Naive thymus-derived CD4-positive, alpha-beta T cell (primary cell): ENCODE measurements at regions of chr7 and their contacts with region 1.

Region 1: GRCh38 chr7:1459522-1459892 is 237 bp upstream of the MICALL2 start:
- DNase-seq: peak; percentile 98 to 99 (median 99)
- ATAC-seq: peak; percentile 97
- H3K4me3 ChIP-seq: peak overlapping the region; percentile 73
- H3K4me3 Mint-ChIP-seq: peak overlapping the region in 8 of 10 donors; percentile 58 to 75 (median 70)
- H3K27ac ChIP-seq: peak overlapping the region; percentile 55
- H3K27ac Mint-ChIP-seq: peak overlapping the region in 1 of 9 donors; percentile 76
- H3K4me1 ChIP-seq: peaks cover 8 to 14% of the 10 kb centered on the region in 2 donors
- H3K4me1 Mint-ChIP-seq: peaks cover 7 to 25% (median 18%) of the 10 kb centered on the region in 7 donors
- H3K27me3 ChIP-seq: no peaks in the 10 kb centered on the region
- H3K27me3 Mint-ChIP-seq: peaks cover 0 to 5% (median 0%) of the 10 kb centered on the region in 5 donors

Region 2: DNA sequence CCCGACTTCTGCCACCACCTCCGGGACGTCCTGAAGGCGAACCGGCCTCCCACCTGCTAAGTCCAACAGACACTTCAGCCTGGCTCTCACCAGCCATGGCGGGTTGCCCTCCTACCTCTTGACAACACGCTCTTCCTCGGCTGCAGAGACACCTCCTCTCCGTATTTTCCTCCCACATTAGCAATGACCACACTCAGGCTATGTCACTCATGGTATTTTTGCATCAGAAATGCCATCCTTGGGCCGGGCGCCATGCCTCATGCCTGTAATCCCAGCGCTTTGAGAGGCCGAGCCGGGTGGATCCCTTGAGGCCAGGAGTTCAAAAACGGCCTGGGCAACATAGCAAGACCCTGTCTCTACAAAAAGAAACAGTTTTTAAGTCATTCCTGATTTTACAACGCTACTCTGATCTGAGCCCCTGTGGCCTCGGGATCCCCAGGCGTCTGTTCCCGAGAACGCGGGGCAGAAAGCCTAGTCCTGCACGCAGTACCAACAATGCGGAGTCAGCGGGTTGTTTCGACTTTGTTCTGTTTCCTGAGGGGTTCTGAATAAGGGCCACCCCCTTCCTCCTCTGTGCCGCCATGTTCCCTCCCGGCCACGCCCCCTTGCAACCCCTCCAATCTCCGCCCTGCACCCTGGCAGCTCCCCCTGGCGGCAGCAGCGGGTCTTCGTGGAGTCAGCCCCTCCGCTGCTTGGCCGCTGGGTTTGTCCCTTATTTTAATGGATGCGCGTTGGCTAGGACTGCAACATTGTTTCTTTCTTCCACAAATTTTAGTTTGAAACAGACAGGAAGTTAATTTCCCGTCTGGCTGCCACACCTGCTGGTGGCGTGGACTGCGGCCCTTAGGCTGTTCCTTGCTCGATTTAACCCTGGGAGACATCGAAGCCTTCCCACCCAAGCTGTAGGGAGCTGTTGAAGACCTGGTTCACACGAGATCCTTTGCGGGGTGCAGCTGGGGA is 289.8 kb before region 1 on chr7:
- CTCF ChIA-PET with region 1: no interaction called
- POLR2A ChIA-PET with region 1: no interaction called
- intact Hi-C with region 1: loop called in 1 of 2 experiments (anchors 1 kb)
- DNase-seq: peak; percentile 81 to 95 (median 94)
- ATAC-seq: peak; percentile 100
- H3K4me3 ChIP-seq: peak overlapping the region; percentile 63
- H3K4me3 Mint-ChIP-seq: peak overlapping the region; percentile 82 to 92 (median 89)
- H3K27ac ChIP-seq: peak overlapping the region; percentile 64
- H3K27ac Mint-ChIP-seq: peak overlapping the region in 8 of 9 donors; percentile 88 to 98 (median 94)
- H3K4me1 ChIP-seq: peaks cover 5 to 8% of the 10 kb centered on the region in 2 donors
- H3K4me1 Mint-ChIP-seq: peaks cover 8 to 16% (median 13%) of the 10 kb centered on the region in 7 donors
- H3K27me3 ChIP-seq: no peaks in the 10 kb centered on the region
- H3K27me3 Mint-ChIP-seq: no peaks in the 10 kb centered on the region

Region 3: GRCh38 chr7:1386623-1387220 is 72.8 kb before region 1 on chr7:
- CTCF ChIA-PET with region 1: no interaction called
- POLR2A ChIA-PET with region 1: no interaction called
- intact Hi-C with region 1: no loop called
- DNase-seq: no peak
- ATAC-seq: no peak
- H3K4me3 ChIP-seq: no peak overlapping the region
- H3K4me3 Mint-ChIP-seq: no peak overlapping the region
- H3K27ac ChIP-seq: no peak overlapping the region
- H3K27ac Mint-ChIP-seq: no peak overlapping the region
- H3K4me1 ChIP-seq: no peaks in the 10 kb centered on the region
- H3K4me1 Mint-ChIP-seq: peaks cover 0 to 6% (median 0%) of the 10 kb centered on the region in 7 donors
- H3K27me3 ChIP-seq: peaks cover 0 to 3% of the 10 kb centered on the region in 2 donors
- H3K27me3 Mint-ChIP-seq: peaks cover 2 to 38% (median 28%) of the 10 kb centered on the region in 5 donors

Region 4: DNA sequence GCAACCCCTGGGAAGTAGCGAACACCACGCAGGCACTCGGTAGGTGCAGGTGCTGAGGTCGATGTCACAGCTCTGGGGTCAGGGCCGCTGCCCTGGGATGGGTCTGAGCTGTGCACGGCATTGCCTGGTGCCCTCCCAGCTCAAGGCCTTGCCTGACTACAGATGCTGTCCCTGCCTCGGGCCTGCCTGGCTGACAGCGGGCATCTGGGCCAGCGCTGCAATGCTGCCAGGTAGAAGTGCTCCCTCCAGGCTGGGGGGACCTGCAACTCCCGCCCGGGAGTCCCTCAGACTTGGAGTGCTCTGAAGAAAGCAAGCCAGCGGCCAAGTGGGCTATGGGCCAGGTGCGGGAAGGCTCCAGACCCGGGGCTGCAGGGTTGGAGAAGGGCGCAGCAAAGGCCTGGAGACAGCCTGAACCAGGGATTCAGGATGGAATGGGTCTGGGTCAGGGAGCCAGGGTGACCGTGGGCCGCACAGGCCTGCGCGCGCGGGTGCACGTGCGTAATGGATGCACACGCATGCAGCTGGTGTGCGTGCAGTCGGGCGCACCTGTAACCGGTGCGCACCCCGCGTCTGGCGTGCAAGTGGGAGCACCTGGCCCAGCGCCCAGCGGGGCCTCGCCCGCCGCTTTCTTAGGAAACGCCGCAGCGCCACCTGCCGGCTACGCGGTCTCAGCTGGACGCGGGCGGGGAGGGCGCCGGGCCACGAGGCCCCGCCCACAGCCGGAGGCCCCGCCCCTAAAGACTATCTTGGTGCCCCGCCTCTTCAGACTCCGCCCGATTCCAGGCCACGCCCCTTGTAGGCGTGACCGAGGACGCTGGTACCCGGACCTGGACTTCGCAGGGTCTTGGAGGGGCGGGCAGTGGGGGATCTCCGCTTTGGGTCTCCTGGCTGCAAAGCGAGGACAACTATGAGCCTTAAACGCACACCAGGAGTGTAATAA is 46.9 kb before region 1 on chr7:
- CTCF ChIA-PET with region 1: no interaction called
- POLR2A ChIA-PET with region 1: no interaction called
- intact Hi-C with region 1: loop called (anchors 1 kb)
- DNase-seq: peak; percentile 83 to 92 (median 90)
- ATAC-seq: peak; percentile 98
- H3K4me3 ChIP-seq: peak overlapping the region; percentile 27
- H3K4me3 Mint-ChIP-seq: peak overlapping the region in 9 of 10 donors; percentile 64 to 79 (median 68)
- H3K27ac ChIP-seq: no peak overlapping the region
- H3K27ac Mint-ChIP-seq: peak overlapping the region in 5 of 9 donors; percentile 43 to 86 (median 56)
- H3K4me1 ChIP-seq: peaks cover 0 to 9% of the 10 kb centered on the region in 2 donors
- H3K4me1 Mint-ChIP-seq: peaks cover 5 to 16% (median 12%) of the 10 kb centered on the region in 7 donors
- H3K27me3 ChIP-seq: no peaks in the 10 kb centered on the region
- H3K27me3 Mint-ChIP-seq: peaks cover 0 to 14% (median 4%) of the 10 kb centered on the region in 5 donors

Region 5: GRCh38 chr7:1503816-1504775 is 44.6 kb after region 1 on chr7 and contains the start of gene INTS1:
- CTCF ChIA-PET with region 1: no interaction called
- POLR2A ChIA-PET with region 1: no interaction called
- intact Hi-C with region 1: loop called in 1 of 2 experiments (anchors 1 kb)
- DNase-seq: peak; percentile 82 to 93 (median 88)
- ATAC-seq: peak; percentile 96
- H3K4me3 ChIP-seq: peak within 1 kb of the TSS; percentile 77
- H3K4me3 Mint-ChIP-seq: peak within 1 kb of the TSS; percentile 80 to 94 (median 87)
- H3K27ac ChIP-seq: peak within 1 kb of the TSS; percentile 77
- H3K27ac Mint-ChIP-seq: peak within 1 kb of the TSS in 8 of 9 donors; percentile 59 to 88 (median 77)
- H3K4me1 ChIP-seq: peaks cover 18 to 35% of the 10 kb centered on the region in 2 donors
- H3K4me1 Mint-ChIP-seq: peaks cover 35 to 60% (median 42%) of the 10 kb centered on the region in 7 donors
- H3K27me3 ChIP-seq: no peaks in the 10 kb centered on the region
- H3K27me3 Mint-ChIP-seq: peaks cover 0 to 4% (median 0%) of the 10 kb centered on the region in 5 donors
- total RNA-seq, gene INTS1: 82.0 to 157 (median 111) TPM

Region 6: GRCh38 chr7:2354186-2354938 is 894.9 kb after region 1 on chr7 and contains the start of gene EIF3B:
- CTCF ChIA-PET with region 1: interaction called, 3 read pairs
- POLR2A ChIA-PET with region 1: no interaction called
- intact Hi-C with region 1: loop called in 1 of 2 experiments (anchors 1 kb)
- DNase-seq: peak; percentile 87 to 97 (median 94)
- ATAC-seq: peak; percentile 90
- H3K4me3 ChIP-seq: peak within 1 kb of the TSS; percentile 89
- H3K4me3 Mint-ChIP-seq: peak within 1 kb of the TSS; percentile 90 to 100 (median 94)
- H3K27ac ChIP-seq: peak within 1 kb of the TSS; percentile 97
- H3K27ac Mint-ChIP-seq: peak within 1 kb of the TSS; percentile 98 to 100 (median 100)
- H3K4me1 ChIP-seq: peaks cover 25 to 38% of the 10 kb centered on the region in 2 donors
- H3K4me1 Mint-ChIP-seq: peaks cover 16 to 48% (median 31%) of the 10 kb centered on the region in 7 donors
- H3K27me3 ChIP-seq: no peaks in the 10 kb centered on the region
- H3K27me3 Mint-ChIP-seq: peaks cover 0 to 3% (median 0%) of the 10 kb centered on the region in 5 donors
- total RNA-seq, gene EIF3B: 127 to 189 (median 158) TPM

Region 7: DNA sequence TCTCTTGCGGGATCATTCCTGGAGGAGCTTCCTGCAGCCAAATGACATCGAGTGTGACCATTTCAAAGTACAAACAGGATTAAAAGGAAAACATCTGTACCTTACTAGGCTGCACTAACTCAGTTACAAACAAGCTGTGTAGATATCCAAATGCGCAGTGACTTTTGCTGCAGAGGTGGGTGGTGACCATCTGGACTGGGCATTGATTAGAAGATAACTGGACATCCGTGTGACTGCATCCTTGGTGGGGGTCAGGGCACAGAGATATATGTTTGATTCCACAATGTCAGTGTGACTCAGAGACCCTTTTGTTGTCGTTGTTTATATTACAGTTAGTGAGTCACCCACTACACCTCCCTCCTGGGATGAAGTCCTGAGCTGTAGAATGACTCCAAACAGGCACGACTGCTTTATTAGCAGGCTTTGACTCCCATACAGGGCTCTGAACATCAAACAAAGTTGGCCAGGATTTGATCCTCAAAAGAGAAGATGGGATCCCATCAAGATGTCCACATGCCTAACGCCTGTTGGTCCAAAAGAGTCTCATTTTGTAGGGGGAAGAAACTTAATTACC is 1784.8 kb after region 1 on chr7:
- CTCF ChIA-PET with region 1: no interaction called
- POLR2A ChIA-PET with region 1: no interaction called
- intact Hi-C with region 1: no loop called
- DNase-seq: no peak
- ATAC-seq: no peak
- H3K4me3 ChIP-seq: no peak overlapping the region
- H3K4me3 Mint-ChIP-seq: no peak overlapping the region
- H3K27ac ChIP-seq: no peak overlapping the region
- H3K27ac Mint-ChIP-seq: no peak overlapping the region
- H3K4me1 ChIP-seq: no peaks in the 10 kb centered on the region
- H3K4me1 Mint-ChIP-seq: peaks cover 0 to 4% (median 0%) of the 10 kb centered on the region in 7 donors
- H3K27me3 ChIP-seq: no peaks in the 10 kb centered on the region
- H3K27me3 Mint-ChIP-seq: no peaks in the 10 kb centered on the region